ENCODE measurements at regions of chr4 and their contacts with region 1.

Region 1: DNA sequence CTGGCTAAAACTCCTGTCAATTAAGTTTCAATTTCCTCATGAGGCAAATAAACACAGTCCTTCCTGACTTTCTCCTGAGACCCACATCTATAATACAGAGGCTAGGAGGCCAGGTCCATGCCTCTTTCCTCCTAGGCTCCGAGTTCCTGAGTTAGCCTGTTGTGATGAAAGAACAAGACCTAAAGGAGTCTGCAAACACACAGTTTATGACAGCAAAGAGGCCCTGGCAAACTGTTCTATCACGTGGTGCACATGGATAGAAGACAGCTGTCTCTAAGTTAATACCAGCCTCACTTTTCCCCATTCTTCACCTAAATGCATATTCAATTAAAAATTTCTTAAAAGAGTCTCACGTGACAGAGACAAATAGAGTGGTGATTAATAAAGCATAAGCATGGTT is 145.2 kb downstream of the TET2 start:
- H3K4me3 Mint-ChIP-seq: no peak overlapping the region
- H3K27ac Mint-ChIP-seq: no peak overlapping the region
- H3K4me1 Mint-ChIP-seq: peaks cover 5% of the 10 kb centered on the region
- H3K27me3 Mint-ChIP-seq: no peaks in the 10 kb centered on the region

Region 2: DNA sequence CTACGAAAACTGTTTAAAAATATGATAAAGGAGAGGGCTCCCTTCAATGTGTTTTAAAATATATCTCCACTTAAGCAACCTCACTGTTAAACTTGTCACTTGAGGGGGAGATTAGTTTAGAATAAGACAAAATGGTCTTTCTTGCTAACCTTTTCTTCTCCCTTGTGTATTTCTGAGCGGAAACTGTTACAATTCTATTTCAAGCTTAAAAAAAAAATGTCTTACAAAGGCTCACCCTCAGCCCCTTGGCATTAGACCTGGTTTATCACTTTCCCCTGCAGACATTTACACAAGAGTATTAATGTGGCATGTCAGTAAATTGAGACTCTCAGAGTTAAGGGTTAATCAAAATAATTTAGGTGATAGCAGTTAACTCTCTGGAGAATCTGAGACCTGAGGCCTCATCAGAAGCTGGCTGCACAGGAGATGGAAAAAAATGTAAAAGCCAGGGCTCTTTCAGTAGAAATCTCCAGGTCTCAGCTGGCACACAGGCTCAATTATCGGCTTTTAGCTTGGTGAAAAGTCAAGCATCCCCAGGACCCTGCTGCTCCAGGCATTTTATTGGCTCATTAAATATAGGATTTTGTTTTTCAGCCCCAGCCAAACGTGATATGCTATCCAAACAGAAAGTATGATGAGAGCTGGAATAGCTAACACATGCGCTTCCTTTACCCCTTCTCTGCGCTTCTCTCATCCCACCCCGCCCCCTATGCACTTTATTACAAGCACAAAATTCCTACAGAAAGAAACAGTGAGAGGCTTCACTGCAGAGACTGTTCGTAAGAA is 51.4 kb after region 1 on chr4:
- intact Hi-C with region 1: loop called (anchors 10 kb)
- H3K4me3 Mint-ChIP-seq: no peak overlapping the region
- H3K27ac Mint-ChIP-seq: no peak overlapping the region
- H3K4me1 Mint-ChIP-seq: peaks cover 8% of the 10 kb centered on the region
- H3K27me3 Mint-ChIP-seq: no peaks in the 10 kb centered on the region

Region 3: GRCh38 chr4:105369988-105370387 is 78.1 kb after region 1 on chr4:
- intact Hi-C with region 1: no loop called
- H3K4me3 Mint-ChIP-seq: no peak overlapping the region
- H3K27ac Mint-ChIP-seq: no peak overlapping the region
- H3K4me1 Mint-ChIP-seq: no peaks in the 10 kb centered on the region
- H3K27me3 Mint-ChIP-seq: no peaks in the 10 kb centered on the region